Activated CD4-positive, alpha-beta T cell treated with anti-CD3 and anti-CD28 coated beads for 36 hours (primary cell): ENCODE measurements at regions of chr3 and their contacts with region 1.

Region 1: GRCh38 chr3:46368569-46368968 is 2.2 kb upstream of the CCR5 start:
- DNase-seq: peak; percentile 65
- ATAC-seq: peak; percentile 22
- H3K4me3 Mint-ChIP-seq: no peak overlapping the region
- H3K27ac Mint-ChIP-seq: peak overlapping the region; percentile 32
- H3K4me1 Mint-ChIP-seq: peaks cover 36% of the 10 kb centered on the region
- H3K27me3 Mint-ChIP-seq: peaks cover 47% of the 10 kb centered on the region

Region 2: DNA sequence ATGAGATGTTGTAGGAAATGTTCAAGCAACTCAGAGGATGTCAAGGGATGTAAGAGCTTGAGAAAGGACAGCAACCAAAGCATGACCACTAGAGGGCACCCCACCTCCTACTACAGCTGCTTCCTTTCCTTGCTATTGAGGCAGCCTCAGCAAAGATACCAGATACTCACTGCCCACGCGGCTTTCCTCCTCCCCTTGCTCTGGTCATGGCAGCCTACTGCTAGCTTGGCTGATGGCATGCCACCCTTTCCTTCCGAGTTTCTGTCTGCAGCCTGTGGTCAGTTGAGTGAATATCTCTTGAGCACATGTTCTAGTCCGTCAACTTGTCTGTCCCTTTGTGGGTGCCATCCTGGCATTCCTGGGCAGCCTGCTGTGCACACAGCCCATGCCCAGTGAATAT is 429.7 kb before region 1 on chr3:
- CTCF ChIA-PET with region 1: interaction called, 6 read pairs
- POLR2A ChIA-PET with region 1: interaction called, 3 read pairs
- intact Hi-C with region 1: loop called (anchors 2 kb)
- DNase-seq: peak; percentile 92
- ATAC-seq: peak; percentile 66
- H3K4me3 Mint-ChIP-seq: no peak overlapping the region
- H3K27ac Mint-ChIP-seq: no peak overlapping the region
- H3K4me1 Mint-ChIP-seq: peaks cover 27% of the 10 kb centered on the region
- H3K27me3 Mint-ChIP-seq: peaks cover 15% of the 10 kb centered on the region

Region 3: GRCh38 chr3:46089237-46090011 is 279.1 kb before region 1 on chr3:
- CTCF ChIA-PET with region 1: interaction called, 4 read pairs
- POLR2A ChIA-PET with region 1: no interaction called
- intact Hi-C with region 1: loop called in 1 of 2 experiments (anchors 2 kb)
- DNase-seq: peak; percentile 51
- ATAC-seq: peak; percentile 54
- H3K4me3 Mint-ChIP-seq: no peak overlapping the region
- H3K27ac Mint-ChIP-seq: no peak overlapping the region
- H3K4me1 Mint-ChIP-seq: peaks cover 14% of the 10 kb centered on the region
- H3K27me3 Mint-ChIP-seq: peaks cover 44% of the 10 kb centered on the region

Region 4: DNA sequence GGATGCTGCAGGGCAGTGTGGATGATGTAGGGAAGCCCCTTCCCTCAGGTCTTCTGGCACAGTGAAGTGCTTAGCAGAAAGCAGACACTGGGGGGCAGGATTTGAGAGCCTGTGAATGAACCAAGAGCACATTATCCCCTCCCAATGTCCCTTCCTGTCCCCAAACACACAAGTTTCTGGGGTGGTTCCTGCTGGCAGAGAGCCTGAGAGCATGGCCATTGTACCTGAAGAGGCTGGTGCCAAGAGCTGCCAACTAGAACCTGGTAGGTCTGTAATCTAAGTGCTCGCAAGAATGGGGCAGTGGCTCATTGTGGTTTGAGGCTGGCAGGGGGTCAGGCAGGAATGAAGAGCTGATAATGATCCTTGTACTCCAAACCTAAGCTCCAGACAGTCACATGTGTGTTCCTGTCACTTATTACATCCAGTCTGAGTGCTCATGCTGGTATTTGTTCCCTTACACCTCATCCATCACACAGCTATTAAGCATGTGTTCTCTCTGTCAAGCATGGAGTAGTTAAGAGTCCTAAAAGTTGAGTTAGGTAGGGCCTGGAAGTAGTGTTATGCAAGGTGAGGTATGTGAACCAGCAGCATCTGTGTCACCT is 153.7 kb before region 1 on chr3:
- CTCF ChIA-PET with region 1: interaction called, 19 read pairs
- POLR2A ChIA-PET with region 1: no interaction called
- intact Hi-C with region 1: loop called in 1 of 2 experiments (anchors 5 kb)
- DNase-seq: peak; percentile 44
- ATAC-seq: no peak
- H3K4me3 Mint-ChIP-seq: no peak overlapping the region
- H3K27ac Mint-ChIP-seq: no peak overlapping the region
- H3K4me1 Mint-ChIP-seq: no peaks in the 10 kb centered on the region
- H3K27me3 Mint-ChIP-seq: no peaks in the 10 kb centered on the region

Region 5: DNA sequence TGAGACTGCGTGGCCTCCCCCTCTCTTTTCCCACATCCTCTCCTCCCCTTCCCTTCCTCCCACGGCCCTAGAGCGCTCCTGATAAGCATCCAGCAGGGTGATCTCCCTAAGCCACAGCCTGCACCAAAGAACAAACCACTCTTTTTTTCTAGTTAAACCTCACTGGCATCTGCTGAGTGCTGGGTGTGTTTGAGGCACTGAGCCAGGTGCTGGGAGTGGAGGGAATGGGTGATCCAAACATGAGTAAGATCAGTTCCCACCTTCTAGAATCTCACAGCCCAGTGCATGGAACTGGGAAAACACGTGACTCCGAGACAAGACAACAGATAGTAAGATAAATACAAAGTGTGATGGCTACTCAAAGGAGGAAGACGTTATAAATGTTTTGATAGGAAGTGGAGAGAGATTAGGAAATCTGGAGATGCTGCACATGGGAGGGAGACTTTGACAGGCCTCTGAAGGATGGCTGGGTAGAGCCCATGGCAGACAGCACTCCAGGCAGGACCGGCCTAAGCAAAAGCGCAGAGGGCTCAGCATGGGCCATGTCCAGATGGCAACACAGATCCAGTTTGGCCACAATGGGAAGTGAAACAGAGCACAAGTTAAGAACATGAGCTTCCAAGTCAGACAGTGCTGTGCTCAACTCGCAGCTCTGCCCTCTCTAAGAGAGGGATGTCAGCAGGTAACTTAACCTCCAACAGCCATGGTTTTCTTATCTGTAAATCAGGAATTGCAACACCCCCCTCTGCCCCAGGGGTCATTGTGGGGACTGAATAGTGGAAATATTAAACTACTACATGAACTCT is 70.7 kb before region 1 on chr3:
- CTCF ChIA-PET with region 1: interaction called, 30 read pairs
- POLR2A ChIA-PET with region 1: interaction called, 23 read pairs
- intact Hi-C with region 1: loop called (anchors 1 kb)
- DNase-seq: peak; percentile 29
- ATAC-seq: no peak
- H3K4me3 Mint-ChIP-seq: no peak overlapping the region
- H3K27ac Mint-ChIP-seq: no peak overlapping the region
- H3K4me1 Mint-ChIP-seq: peaks cover 86% of the 10 kb centered on the region
- H3K27me3 Mint-ChIP-seq: peaks cover 22% of the 10 kb centered on the region

Region 6: DNA sequence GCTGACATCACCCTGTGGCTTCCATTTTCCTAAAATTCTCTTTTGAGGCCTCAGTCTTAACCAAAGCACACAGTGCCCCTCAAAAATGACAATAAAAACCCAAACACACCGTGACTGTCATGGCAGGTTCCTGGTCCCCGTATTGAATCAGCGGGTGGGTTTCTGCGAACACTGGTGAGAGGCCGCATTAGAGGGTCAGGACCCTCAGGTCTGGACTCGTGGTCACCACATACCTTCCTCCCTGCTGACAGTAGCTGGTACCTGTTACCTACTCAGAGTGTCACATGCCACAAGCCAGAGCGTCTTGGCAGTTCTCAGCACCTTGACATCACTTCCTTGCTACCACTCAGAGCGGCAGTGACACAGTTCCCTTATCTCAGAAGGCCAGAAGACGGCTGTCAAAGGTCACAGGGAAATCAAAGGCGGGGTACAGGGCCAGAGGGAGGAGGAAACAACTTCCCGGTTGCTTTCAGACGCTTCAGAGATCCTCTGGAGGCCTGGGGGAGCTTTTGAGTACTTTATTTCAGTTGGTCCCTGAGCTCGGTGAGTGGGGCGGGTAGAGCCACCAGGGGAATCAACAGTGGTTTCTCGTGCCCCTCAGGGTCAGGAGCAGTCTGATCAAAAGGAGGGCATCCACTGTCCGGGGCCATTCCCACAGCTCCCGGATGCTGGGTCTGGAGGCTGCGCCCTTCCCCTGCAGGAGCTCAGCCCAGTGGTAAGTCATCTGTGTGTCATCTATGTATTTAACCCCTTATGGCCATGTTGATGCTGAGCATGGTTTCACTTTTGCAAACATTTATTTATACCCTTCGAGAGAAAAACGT is 38.4 kb after region 1 on chr3 and contains the starts of genes CCR5AS and CCRL2:
- CTCF ChIA-PET with region 1: no interaction called
- POLR2A ChIA-PET with region 1: no interaction called
- intact Hi-C with region 1: loop called in 1 of 2 experiments (anchors 1 kb)
- DNase-seq: peak; percentile 65
- ATAC-seq: peak; percentile 92
- H3K4me3 Mint-ChIP-seq: peak within 1 kb of the TSS; percentile 71
- H3K27ac Mint-ChIP-seq: peak within 1 kb of the TSS; percentile 81
- H3K4me1 Mint-ChIP-seq: peaks cover 33% of the 10 kb centered on the region
- H3K27me3 Mint-ChIP-seq: peaks cover 2% of the 10 kb centered on the region
- total RNA-seq, gene CCRL2: 1.0 to 1.3 TPM

Region 7: GRCh38 chr3:46484911-46485778 is 116.6 kb after region 1 on chr3:
- CTCF ChIA-PET with region 1: no interaction called
- POLR2A ChIA-PET with region 1: no interaction called
- intact Hi-C with region 1: no loop called
- DNase-seq: no peak
- ATAC-seq: no peak
- H3K4me3 Mint-ChIP-seq: no peak overlapping the region
- H3K27ac Mint-ChIP-seq: no peak overlapping the region
- H3K4me1 Mint-ChIP-seq: peaks cover 14% of the 10 kb centered on the region
- H3K27me3 Mint-ChIP-seq: peaks cover 3% of the 10 kb centered on the region